ENCODE measurements at regions of chr3 and their contacts with region 1.

Region 1: GRCh38 chr3:112519424-112520001 is 20.2 kb upstream of the BTLA start:
- DNase-seq: no peak
- ATAC-seq: peak; percentile 90

Region 2: DNA sequence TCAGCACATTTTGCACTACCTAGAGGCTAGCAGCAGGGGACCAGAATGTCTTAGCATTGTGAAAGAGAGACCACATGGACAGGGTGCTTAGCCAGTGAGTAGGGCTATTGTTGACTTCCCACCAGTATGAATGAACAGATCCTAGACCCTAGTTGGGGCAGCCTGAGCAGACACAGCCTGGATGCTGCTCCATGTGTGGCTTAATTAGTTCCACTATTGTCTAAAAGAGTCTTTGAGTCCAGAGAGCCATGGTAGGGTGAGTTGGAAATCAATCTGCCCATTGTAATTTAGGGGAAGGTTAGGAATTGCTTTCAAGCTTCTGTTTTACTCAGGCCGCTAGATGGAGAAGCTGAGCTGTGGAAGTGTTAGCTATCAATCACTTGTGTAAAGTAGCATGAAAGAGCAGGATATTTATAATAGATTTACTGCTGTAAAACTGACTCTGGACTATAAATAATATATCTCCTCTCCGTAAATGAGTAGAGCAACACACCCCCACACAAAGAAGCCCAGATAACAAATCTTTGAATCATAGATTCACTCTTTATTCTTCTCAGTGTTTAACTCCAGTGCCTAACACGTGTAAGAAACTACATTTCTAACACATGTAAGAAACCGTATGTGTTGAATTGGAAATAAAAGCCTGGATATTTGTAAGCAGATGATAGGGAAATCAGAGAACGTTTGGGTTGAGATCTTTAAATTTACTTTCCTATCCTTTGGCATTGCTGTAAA is 382.4 kb before region 1 on chr3:
- intact Hi-C with region 1: loop called in 1 of 2 experiments (anchors 10 kb)
- DNase-seq: peak in 1 of 2 donors; percentile 37
- ATAC-seq: peak; percentile 76

Region 3: DNA sequence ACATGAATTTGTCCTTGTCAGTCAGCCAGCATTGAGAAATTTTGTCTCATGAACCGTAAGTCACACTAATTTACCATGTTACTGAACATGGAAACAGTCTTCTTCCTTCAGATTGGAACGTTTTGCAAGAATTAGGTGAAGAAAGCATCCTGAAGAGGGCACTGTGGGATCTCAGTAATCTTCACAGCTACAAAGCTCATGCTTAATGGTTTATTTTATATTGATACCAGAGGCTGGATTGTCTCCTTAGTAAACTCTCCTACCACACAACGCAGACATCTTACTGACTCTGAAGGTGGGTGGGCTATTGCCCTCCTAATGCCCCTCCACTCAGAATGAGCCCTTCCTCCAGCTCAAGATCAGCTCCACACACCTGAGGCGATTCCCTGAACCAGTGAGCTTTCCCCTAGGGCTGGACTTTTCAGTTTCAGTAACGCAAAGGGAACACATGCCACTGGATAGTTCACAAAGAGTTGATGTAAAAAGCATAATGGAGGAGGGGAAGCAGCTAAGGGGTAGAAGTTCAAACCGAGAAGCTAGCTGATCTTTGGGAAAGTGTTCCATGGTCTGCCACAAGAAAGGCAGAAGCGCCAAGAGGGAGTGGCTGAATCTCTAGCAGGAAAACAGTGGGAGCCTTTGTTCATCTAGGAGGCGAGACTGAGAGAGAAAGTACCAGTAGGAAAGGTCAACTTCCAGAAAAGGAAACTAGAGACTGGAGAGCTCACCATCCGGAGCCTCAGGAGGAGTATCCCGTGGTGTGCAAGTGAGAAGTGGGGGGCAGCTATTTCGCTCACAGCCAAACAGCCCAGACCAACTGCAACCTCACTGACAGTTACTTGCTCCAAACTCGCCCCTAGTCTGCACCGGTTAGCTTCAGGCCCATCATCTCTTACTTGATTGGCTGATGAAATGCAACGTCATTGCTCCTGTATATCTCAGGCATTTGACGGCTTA is 225.9 kb before region 1 on chr3 and contains the start of gene SLC9C1:
- intact Hi-C with region 1: loop called in 1 of 2 experiments (anchors 10 kb)
- DNase-seq: peak; percentile 38 to 41
- ATAC-seq: peak; percentile 88
- total RNA-seq, gene SLC9C1: 0.43 to 0.45 TPM

Region 4: GRCh38 chr3:112327371-112327951 is 192.1 kb before region 1 on chr3:
- intact Hi-C with region 1: loop called in 1 of 2 experiments (anchors 2 kb)
- DNase-seq: no peak
- ATAC-seq: peak; percentile 100

Region 5: DNA sequence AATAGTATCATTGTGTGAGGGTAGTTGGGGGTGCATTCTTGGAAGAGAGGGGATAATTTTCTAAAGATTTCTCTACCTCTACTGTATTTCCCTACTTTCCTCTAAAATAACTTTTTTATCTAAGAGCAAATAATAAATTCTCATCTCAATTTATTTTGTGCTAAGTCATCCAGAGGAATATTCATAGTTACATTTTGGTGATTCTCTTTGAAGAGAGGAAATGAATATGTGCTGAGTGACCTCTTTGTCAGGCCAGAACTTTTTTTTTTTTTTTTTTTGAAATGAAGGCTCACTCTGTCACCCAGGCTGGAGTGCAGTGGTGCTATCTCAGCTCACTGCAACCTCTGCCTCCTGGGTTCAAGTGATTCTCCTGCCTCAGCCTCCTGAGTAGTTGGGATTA is 136.5 kb after region 1 on chr3:
- intact Hi-C with region 1: no loop called
- DNase-seq: no peak
- ATAC-seq: no peak